Activated CD8-positive, alpha-beta memory T cell treated with anti-CD3 and anti-CD28 coated beads, Interleukin-2, amount 10 ng/mL, durations not matched to agents 7 days and 5 days (primary cell): ENCODE measurements at regions of chr20 and their contacts with region 1.

Region 1: DNA sequence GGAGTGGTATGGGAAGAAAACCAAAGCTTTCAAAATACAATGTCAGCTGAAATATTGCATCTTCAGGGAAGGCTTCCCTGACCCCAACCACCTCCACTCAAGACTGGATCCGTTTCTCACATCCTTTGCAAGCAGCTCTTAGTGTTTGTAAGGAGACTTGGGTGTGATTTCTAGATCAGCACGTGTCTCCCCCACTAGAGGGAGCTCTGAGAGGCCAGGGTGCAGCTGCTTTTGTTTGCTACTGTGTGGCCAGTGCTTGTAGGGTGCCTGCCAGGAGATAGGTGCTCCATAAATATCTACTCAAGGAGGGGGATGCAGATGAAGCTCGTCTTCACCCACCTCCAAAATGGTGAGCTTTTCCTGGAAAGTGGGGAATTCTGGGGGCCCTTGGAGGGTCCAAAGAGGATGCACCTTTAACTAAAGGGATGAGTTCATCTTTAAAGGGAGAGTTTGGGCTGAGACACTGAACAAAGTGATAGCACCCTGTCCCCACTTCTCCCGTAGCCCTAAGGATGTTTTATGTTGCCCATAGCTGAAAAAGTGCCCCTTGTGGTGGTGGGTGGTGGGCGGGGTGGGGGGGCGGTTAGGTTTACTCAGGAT is 52.6 kb upstream of the MAFB start:
- DNase-seq: peak; percentile 70
- ATAC-seq: peak; percentile 51
- H3K4me3 Mint-ChIP-seq: no peak overlapping the region
- H3K27ac Mint-ChIP-seq: no peak overlapping the region
- H3K4me1 Mint-ChIP-seq: no peaks in the 10 kb centered on the region
- H3K27me3 Mint-ChIP-seq: peaks cover 15% of the 10 kb centered on the region

Region 2: DNA sequence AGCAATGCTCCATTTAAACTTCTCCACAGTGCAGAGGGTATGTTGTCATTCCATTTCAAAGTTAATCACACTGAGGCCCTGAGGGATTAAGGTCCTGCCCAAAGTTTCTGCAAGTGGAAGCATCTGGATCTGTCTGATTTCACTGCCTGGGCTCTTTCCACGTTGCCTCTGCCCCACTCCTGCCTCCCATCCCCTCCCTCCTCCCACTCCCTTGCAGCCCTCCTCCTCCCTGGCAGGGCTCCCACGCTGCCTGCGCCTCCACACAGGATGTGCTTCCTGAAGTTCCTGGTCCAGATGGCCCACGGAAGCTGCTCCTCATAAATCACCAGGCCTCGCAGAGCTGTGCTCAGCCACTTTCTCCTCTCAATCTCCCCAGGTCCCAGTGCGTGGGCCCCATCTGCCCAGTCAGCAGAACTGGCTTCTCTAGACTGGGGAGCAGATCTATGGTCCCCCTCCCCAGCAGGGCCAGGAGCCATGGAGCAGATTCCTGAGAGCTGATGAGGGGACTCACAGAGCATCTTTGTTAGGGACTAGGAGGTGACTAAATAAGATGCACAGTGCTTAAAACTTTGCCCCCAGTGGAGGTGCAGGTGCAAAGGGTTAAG is 12.8 kb after region 1 on chr20:
- CTCF ChIA-PET with region 1: interaction called, 40 read pairs
- DNase-seq: no peak
- ATAC-seq: no peak
- H3K4me3 Mint-ChIP-seq: no peak overlapping the region
- H3K27ac Mint-ChIP-seq: no peak overlapping the region
- H3K4me1 Mint-ChIP-seq: peaks cover 30% of the 10 kb centered on the region
- H3K27me3 Mint-ChIP-seq: no peaks in the 10 kb centered on the region

Region 3: DNA sequence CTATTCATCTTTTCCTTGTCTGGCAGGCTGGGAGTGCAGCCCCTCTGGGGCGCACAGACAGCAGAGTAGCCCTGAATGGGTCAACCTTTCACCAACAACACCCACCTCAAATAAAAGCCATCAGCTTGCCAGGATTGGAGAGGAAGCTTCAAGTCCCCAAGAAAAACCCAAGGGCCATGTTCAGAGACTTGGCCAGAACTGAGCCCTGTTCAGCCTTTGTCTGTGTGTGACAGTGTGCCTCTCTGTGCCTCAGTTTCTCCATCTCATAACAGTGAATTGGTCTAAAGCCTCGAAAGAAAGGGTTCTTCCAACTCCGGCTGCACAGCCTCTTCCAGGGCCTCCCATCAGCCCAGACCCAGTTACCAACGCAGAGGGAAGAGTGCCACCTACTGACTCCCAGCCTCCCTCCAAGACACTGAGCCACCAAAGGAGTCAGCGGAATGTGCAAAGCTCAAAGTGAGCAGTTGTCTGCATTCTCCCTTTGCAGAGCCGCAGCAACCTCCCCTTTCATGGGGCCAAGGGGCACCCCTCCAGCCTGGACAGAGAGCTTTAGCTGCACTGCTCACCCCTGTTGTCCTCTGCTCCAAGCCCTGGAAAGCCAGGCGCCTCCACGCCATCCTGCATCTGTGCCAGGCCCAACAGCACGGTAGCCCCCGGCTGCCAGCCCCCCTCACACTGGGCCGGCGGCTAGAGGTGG is 204.3 kb after region 1 on chr20:
- CTCF ChIA-PET with region 1: interaction called, 18 read pairs
- DNase-seq: peak; percentile 46
- ATAC-seq: peak; percentile 36
- H3K4me3 Mint-ChIP-seq: no peak overlapping the region
- H3K27ac Mint-ChIP-seq: no peak overlapping the region
- H3K4me1 Mint-ChIP-seq: no peaks in the 10 kb centered on the region
- H3K27me3 Mint-ChIP-seq: peaks cover 25% of the 10 kb centered on the region

Region 4: GRCh38 chr20:40953856-40954255 is 212.2 kb after region 1 on chr20:
- CTCF ChIA-PET with region 1: interaction called, 10 read pairs
- DNase-seq: peak; percentile 41
- ATAC-seq: peak; percentile 67
- H3K4me3 Mint-ChIP-seq: no peak overlapping the region
- H3K27ac Mint-ChIP-seq: no peak overlapping the region
- H3K4me1 Mint-ChIP-seq: peaks cover 11% of the 10 kb centered on the region
- H3K27me3 Mint-ChIP-seq: peaks cover 25% of the 10 kb centered on the region